HepG2 (cell line): ENCODE measurements at regions of chr7 and their contacts with region 1.

Region 1: DNA sequence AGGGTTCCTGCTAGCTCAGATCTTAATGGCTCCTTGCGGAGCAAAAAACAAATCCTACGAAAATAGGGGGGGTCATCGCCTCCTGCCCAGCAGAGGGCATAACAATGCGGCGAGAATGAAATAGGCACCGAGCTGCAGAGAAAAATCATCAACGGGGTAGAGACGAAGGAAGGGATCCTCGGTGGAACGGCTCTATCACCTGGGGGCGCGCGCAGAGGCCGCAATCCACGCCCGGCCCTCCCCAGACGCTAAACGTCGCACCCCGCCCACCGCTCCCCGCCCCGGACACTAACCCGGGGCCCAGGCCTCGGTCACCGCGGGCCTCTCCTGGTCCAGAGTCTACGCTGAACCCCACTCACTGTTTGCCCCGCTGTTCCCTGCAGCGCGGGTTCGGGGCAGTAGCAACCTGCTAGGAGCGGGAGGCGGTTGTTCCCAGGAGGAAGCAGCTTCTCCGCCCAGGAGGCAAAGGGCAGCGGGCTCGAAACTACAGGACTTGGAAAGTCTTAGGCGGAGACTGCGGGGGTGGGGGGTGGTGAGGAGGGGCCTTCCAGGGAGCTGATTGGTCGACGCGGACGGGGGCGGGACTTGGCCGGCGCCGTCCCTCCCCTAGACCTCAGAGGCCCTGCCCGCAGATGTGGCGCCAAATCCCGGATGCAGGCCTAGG is at the start of gene TCAF1:
- DNase-seq: peak; percentile 96
- ATAC-seq: peak; percentile 85
- H3K4me3 ChIP-seq: peak within 1 kb of the TSS; percentile 80 to 97 (median 90)
- H3K27ac ChIP-seq: peak within 1 kb of the TSS; percentile 99
- H3K4me1 ChIP-seq: peaks cover 64% of the 10 kb centered on the region
- H3K27me3 ChIP-seq: no peaks in the 10 kb centered on the region; a peak in 1 of 5 replicates
- CTCF ChIP-seq: peak; percentile 62
- EP300 ChIP-seq: peak; percentile 67 to 79; a peak in 3 of 4 replicates
- POLR2A ChIP-seq: peak; percentile 78 to 88
- RAD21 ChIP-seq: peak; percentile 52
- total RNA-seq, gene TCAF1: 101 and 124 TPM in 2 replicates

Region 2: GRCh38 chr7:143884969-143885559 is 16.7 kb before region 1 on chr7:
- CTCF ChIA-PET with region 1: no interaction called
- POLR2A ChIA-PET with region 1: interaction called, 174 read pairs
- in situ Hi-C with region 1: no loop called
- intact Hi-C with region 1: loop called (anchors 1 kb)
- DNase-seq: no peak
- ATAC-seq: no peak
- H3K4me3 ChIP-seq: no peak overlapping the region
- H3K27ac ChIP-seq: no peak overlapping the region
- H3K4me1 ChIP-seq: peaks cover 19% of the 10 kb centered on the region
- H3K27me3 ChIP-seq: no peaks in the 10 kb centered on the region; a peak in 1 of 5 replicates
- CTCF ChIP-seq: no peak
- EP300 ChIP-seq: no peak
- POLR2A ChIP-seq: no peak
- RAD21 ChIP-seq: no peak

Region 3: DNA sequence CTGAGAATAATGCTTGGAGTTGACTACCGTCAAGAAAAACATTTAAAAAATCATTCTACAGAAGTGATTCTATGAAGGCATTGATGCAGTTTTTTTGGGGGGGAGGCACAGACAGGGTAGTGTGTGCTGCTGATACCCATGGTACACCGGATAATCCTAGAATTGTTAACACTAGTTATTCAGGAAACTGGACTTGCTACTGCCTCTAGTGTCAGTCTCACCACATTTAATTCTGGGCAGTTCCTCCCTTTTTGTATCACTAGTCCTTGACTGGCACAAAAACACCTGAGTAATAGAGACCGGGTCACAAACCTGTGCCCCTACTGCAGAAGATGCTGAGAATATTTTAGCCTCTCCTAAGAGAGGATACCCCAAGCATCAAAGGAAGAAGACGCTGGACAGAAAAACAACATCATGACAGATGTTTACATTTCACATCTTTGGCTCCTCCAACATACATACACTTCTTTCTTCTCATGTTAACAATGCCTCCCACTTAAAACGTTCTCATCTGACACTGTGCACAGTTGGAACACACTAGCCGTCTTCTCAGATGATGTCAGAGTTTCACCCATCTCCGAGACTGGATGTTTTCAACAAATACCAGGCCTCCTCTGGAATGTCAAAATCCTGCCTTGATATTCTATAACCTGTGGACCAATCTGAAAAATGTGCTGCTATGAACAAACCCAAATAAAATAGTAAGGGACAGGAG is 13.3 kb after region 1 on chr7:
- CTCF ChIA-PET with region 1: no interaction called
- POLR2A ChIA-PET with region 1: interaction called, 20 read pairs
- in situ Hi-C with region 1: no loop called
- intact Hi-C with region 1: no loop called
- DNase-seq: no peak
- ATAC-seq: peak; percentile 67
- H3K4me3 ChIP-seq: no peak overlapping the region
- H3K27ac ChIP-seq: no peak overlapping the region
- H3K4me1 ChIP-seq: peaks cover 45% of the 10 kb centered on the region
- H3K27me3 ChIP-seq: no peaks in the 10 kb centered on the region
- CTCF ChIP-seq: no peak
- EP300 ChIP-seq: no peak
- POLR2A ChIP-seq: no peak
- RAD21 ChIP-seq: no peak

Region 4: GRCh38 chr7:143958781-143959180 is 57.0 kb after region 1 on chr7:
- CTCF ChIA-PET with region 1: no interaction called
- POLR2A ChIA-PET with region 1: no interaction called
- in situ Hi-C with region 1: no loop called
- intact Hi-C with region 1: loop called (anchors 2 kb)
- DNase-seq: peak; percentile 65
- ATAC-seq: peak; percentile 80
- H3K4me3 ChIP-seq: no peak overlapping the region
- H3K27ac ChIP-seq: peak overlapping the region; percentile 46
- H3K4me1 ChIP-seq: peaks cover 19% of the 10 kb centered on the region
- H3K27me3 ChIP-seq: no peaks in the 10 kb centered on the region
- CTCF ChIP-seq: no peak
- EP300 ChIP-seq: 0 out of 4 replicates have a peak, but pooled peaks have one; percentile 16 to 51
- POLR2A ChIP-seq: no peak
- RAD21 ChIP-seq: no peak

Region 5: DNA sequence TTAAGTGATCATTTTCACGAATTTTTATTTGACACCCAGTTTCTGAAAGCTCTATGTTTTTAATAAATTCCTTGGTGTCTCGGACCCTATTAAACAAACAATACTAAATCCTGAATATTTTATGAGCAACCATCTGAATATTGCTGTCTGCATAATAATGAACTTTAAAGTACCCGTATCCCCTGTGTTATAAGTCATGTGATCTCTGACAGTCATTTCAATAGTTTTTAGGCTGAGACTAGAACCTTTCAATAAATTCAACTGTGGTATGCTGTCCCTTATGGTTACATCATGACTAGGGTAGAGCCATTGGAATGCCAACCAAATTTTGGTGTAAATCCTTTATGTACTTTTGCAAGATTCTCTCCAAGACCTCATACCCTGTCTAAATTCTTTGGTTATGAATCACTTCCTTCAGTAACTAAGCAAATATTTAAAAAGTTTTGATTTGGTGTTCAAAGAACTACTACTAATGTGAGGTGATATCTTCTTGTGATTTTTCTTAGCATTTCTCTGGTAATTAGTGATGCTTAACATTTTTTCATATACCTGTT is 77.5 kb after region 1 on chr7:
- CTCF ChIA-PET with region 1: no interaction called
- POLR2A ChIA-PET with region 1: interaction called, 6 read pairs
- in situ Hi-C with region 1: no loop called
- intact Hi-C with region 1: loop called (anchors 5 kb)
- DNase-seq: peak; percentile 35
- ATAC-seq: no peak
- H3K4me3 ChIP-seq: no peak overlapping the region
- H3K27ac ChIP-seq: no peak overlapping the region
- H3K4me1 ChIP-seq: peaks cover 14% of the 10 kb centered on the region
- H3K27me3 ChIP-seq: no peaks in the 10 kb centered on the region
- CTCF ChIP-seq: no peak
- EP300 ChIP-seq: no peak
- POLR2A ChIP-seq: no peak
- RAD21 ChIP-seq: no peak

Region 6: DNA sequence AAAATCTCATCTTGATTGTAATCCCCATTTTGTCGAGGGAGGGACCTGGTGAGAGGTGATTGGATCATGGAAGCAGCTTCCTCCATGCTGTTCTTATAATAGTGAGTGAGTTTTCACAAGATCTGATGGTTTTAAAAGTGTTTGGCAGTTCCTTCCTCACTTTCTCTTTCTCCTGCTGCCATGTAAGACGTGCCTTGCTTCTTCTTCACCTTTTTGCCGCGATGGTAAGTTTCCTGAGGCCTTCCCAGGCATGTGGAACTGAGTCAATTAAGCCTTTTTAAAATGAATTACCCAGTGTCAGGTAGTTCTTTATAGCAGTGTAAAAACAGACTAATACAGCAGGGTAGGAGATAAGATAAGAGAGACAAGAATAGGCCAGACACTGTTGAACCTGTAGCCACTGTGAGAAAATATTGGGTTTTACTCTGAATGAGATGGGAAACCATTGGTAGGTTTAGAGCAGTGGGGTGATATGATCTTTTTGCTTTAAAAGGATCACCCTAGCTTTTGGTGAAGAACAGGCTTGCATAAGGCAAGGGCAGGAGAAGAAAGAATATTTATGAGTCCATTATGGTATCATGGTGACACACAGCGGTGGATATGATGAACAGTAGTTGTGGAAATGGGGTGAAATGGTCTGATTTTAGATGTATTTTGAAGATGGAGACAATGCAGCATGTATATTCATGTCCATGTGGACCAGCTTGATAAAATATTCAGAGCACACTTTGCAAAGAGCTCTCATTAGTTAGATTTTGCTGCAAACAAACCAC is 109.8 kb after region 1 on chr7:
- CTCF ChIA-PET with region 1: no interaction called
- POLR2A ChIA-PET with region 1: interaction called, 3 read pairs
- in situ Hi-C with region 1: no loop called
- intact Hi-C with region 1: loop called (anchors 1 kb)
- DNase-seq: peak; percentile 51
- ATAC-seq: peak; percentile 93
- H3K4me3 ChIP-seq: no peak overlapping the region
- H3K27ac ChIP-seq: no peak overlapping the region
- H3K4me1 ChIP-seq: peaks cover 10% of the 10 kb centered on the region
- H3K27me3 ChIP-seq: no peaks in the 10 kb centered on the region
- CTCF ChIP-seq: peak; percentile 81
- EP300 ChIP-seq: no peak
- POLR2A ChIP-seq: no peak
- RAD21 ChIP-seq: peak; percentile 57